Dorsolateral prefrontal cortex (tissue), 120 donors: ENCODE measurements at regions of chr11 and their contacts with region 1.

Region 1: DNA sequence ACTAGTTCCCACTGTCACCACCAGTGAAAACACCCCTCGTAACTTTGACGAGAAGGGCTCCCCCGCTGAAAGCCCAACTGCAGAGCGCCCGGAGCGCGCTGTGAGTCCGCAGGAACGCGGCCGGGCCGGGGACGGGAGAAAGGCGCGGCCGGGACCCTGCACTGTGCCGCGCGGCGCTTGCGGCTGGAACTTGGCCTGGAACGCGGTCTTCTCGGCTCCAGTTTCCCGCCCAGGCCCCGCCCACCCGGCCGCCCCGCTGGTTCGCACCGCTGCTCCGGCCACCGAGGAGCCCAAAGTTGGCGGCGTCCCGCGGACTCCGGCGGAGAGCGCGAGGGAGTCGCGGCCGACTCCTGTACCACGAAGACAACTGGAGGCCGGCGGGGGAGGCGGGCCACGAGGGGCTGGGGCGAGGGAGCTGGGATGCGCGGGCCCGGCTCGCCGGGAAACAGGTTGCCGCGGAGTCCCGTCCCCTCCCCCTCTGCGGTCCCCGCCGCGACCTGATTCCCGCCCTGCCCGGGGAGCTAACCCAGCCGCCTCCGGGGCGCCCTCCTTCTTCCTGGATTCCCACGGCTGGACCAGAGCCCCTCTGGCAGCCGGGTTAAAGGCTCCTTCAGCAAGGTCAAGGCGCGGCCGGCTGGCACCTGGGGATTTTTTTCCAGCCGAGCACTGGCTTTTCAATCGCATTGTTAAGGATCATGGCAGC is 3.4 kb downstream of the TENM4 start:
- DNase-seq: peak in 6 of 10 donors; percentile 26 to 61 (median 42)
- H3K4me3 ChIP-seq: peak overlapping the region; percentile 41 to 84 (median 71)
- H3K27ac ChIP-seq: peak overlapping the region in 46 of 59 donors; percentile 9 to 96 (median 87)
- H3K27me3 ChIP-seq: peaks cover 0 to 68% (median 6%) of the 10 kb centered on the region in 45 donors
- CTCF ChIP-seq: no peak

Region 2: DNA sequence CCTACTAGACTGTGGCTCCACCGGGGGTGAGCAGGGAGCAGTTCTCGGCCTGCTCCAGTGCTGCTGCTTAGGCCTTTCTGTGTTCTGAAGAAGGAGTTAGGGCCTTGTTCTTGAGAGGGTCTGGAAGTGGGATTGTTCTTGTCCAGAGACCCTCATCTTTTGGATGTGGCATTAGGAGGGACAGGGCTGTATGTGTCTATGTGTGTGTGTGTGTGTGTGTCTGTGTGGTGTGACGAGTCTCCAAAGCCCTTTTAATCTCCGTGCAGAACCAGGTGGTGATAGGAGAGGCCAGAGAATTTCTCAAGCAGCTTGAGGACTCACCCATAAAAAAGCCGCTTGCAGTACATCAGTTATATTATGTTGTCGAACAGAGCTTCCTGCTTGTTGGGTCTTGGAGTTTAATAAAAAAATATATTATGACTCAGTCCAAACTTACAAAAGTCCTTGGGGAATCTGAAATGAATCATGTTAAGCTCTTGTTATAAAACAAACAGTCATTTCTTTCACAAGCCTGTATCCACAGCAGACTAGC is 193.1 kb before region 1 on chr11:
- intact Hi-C with region 1: loop called in 1 of 2 experiments (anchors 10 kb)
- DNase-seq: no peak
- H3K4me3 ChIP-seq: no peak overlapping the region
- H3K27ac ChIP-seq: peak overlapping the region in 6 of 59 donors; percentile 10 to 57 (median 38)
- H3K27me3 ChIP-seq: peaks cover 0 to 37% (median 0%) of the 10 kb centered on the region in 45 donors
- CTCF ChIP-seq: no peak

Region 3: GRCh38 chr11:79259402-79260199 is 177.8 kb before region 1 on chr11:
- intact Hi-C with region 1: loop called in 1 of 2 experiments (anchors 5 kb)
- DNase-seq: no peak
- H3K4me3 ChIP-seq: no peak overlapping the region
- H3K27ac ChIP-seq: no peak overlapping the region
- H3K27me3 ChIP-seq: no peaks in the 10 kb centered on the region
- CTCF ChIP-seq: peak in 3 of 56 donors; percentile 12 to 20 (median 13)